AG04450 (cell line): ENCODE measurements at regions of chr3 and their contacts with region 1.

Region 1: GRCh38 chr3:185659942-185660921 is 74.1 kb downstream of the SENP2 start:
- DNase-seq: peak; percentile 64
- H3K4me3 ChIP-seq: no peak overlapping the region
- H3K27ac ChIP-seq: peak overlapping the region; percentile 47
- H3K27me3 ChIP-seq: no peaks in the 10 kb centered on the region
- CTCF ChIP-seq: peak; percentile 99

Region 2: GRCh38 chr3:185693985-185694653 is 33.9 kb after region 1 on chr3:
- CTCF ChIA-PET with region 1: interaction called, 27 read pairs
- POLR2A ChIA-PET with region 1: interaction called, 3 read pairs
- DNase-seq: no peak
- H3K4me3 ChIP-seq: no peak overlapping the region
- H3K27ac ChIP-seq: peak overlapping the region; percentile 61
- H3K27me3 ChIP-seq: no peaks in the 10 kb centered on the region
- CTCF ChIP-seq: no peak

Region 3: DNA sequence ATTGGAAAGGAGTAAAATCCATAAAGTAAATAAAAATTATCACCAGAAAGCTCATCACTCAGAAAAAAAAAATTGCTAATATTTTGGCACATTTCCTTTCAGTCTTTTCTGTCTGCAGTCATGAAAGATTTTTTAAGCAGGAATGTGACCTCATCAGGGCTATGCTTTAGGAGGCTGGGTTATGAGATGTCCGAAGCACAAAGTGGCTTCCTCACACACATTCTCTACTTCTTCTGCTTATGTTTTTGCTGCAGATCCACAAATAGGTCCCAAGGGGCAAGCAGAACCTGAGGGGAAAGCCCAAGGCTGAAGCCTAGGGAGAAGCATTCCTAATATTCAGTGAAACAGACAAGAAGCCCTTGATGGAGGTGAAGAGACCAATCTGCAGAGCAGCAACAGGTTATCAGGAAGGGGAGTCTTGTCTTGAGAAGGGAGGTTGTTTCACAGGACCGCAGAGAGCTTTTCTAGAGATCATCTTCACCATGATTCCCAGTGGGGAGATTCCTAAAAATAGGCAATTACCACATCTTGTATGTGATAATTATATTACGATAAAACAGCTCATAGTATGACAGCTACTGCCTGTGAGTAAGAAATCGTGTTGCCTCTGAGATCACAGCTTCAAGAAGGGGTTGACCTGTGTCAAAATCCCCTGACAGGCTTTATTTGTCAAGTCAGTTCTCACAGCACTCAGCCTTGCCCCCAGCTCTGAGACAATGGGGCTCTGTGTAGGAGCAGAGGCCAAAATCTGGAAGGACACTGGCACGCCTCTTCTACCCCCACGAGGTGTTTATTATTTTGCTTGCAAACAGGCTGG is 104.1 kb after region 1 on chr3:
- CTCF ChIA-PET with region 1: interaction called, 38 read pairs
- POLR2A ChIA-PET with region 1: interaction called, 6 read pairs
- DNase-seq: no peak
- H3K4me3 ChIP-seq: no peak overlapping the region
- H3K27ac ChIP-seq: no peak overlapping the region
- H3K27me3 ChIP-seq: no peaks in the 10 kb centered on the region
- CTCF ChIP-seq: no peak

Region 4: DNA sequence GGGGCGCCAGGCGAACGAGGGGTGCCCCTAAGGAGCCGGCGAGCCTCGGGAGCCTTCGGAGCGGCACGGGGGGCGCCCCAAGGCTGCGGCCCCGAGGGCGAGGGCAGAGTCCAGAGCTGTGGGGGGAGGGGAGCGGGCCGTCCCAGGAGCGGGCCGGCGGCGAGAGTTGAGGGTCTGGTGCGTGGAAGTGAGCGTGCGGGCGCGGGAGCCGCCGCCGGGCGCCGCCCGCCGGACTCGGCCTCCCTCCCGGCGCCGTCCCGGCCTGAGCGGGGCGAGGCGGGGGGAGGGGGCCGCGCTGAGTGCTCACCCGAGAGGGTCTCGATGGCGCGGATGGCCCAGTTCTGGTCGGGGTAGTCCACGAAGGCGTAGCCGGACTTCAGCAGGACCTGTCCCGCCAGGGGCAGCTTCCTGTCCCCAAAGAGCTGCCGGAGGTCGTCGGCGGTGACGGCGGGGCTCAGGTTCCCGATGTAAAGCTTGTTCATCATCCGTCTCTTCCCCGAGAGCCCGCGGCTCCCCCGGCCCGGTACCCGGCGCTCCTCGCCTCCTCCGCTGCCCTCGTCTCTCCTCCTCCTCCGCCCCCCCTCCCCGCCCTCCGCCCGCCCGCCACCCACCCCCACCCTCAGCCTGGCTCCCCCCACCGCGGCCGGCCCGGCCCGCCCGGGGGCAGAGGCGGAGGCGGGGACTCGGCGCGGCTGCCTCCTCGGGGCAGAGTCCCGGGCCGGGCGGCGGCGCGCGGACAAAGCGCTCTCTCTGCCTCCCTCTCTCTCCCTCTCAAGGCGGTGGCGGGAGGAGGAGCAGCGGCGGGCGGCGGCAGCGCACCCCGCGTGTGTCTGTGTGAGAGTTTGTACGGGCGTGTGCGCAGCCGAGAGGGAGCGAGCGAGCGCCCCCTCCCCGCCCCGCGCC is 164.5 kb after region 1 on chr3 and contains the start of gene IGF2BP2:
- CTCF ChIA-PET with region 1: interaction called, 48 read pairs
- POLR2A ChIA-PET with region 1: interaction called, 4 read pairs
- DNase-seq: peak; percentile 43
- H3K4me3 ChIP-seq: peak within 1 kb of the TSS; percentile 95
- H3K27ac ChIP-seq: peak within 1 kb of the TSS; percentile 86
- H3K27me3 ChIP-seq: no peaks in the 10 kb centered on the region
- CTCF ChIP-seq: no peak
- polyA plus RNA-seq, gene IGF2BP2: 9.9 and 25.2 TPM in 2 replicates

Region 5: DNA sequence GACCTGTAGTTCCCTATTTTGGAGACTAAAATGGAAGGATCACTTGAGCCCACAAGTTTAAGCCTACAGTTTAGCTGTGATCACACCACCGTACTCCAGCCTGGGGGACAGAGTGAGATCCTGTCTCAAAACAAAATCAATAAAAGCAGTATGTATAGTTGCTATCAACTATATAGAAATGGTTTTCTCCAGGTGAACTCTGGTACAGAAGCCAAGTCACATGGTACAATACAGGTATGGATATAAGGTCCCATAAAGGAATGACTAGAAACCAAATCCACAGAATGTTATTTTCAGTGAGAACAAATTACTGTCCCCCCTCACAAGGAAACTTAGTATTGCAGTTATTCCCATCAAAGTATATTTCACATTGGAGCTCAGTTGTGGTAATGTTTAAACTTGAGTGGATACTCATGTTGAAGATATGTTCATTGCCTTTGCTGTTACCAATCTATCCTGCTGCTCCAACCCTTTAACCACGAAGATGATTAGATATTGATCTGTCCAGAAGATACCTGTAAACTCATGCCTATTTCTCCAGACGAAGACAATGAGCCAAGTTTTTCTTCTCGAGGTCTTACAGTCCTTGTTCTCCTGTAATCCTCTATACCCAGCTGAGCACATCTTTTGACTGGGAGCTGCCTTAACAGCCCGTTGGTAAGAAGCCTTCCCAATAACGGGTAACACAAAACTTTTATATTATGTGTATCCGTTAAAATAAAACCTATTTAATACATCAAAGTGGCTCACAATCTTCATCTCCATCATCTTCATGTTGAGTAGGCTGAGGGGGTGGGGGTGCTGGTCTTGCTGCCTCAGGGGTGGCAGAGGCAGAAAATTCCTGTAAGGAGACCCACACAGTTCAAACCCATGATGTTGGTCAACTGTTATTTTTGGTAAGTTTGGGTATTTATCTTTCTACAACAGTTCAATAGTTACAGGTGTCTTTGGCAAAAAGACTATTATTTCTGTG is 253.0 kb after region 1 on chr3:
- CTCF ChIA-PET with region 1: interaction called, 45 read pairs
- POLR2A ChIA-PET with region 1: interaction called, 3 read pairs
- DNase-seq: no peak
- H3K4me3 ChIP-seq: no peak overlapping the region
- H3K27ac ChIP-seq: no peak overlapping the region
- H3K27me3 ChIP-seq: no peaks in the 10 kb centered on the region
- CTCF ChIP-seq: no peak

Region 6: GRCh38 chr3:185942907-185943759 is 282.9 kb after region 1 on chr3:
- CTCF ChIA-PET with region 1: interaction called, 65 read pairs
- POLR2A ChIA-PET with region 1: interaction called, 12 read pairs
- DNase-seq: peak; percentile 49
- H3K4me3 ChIP-seq: no peak overlapping the region
- H3K27ac ChIP-seq: no peak overlapping the region
- H3K27me3 ChIP-seq: peaks cover 5% of the 10 kb centered on the region
- CTCF ChIP-seq: peak; percentile 99

Region 7: DNA sequence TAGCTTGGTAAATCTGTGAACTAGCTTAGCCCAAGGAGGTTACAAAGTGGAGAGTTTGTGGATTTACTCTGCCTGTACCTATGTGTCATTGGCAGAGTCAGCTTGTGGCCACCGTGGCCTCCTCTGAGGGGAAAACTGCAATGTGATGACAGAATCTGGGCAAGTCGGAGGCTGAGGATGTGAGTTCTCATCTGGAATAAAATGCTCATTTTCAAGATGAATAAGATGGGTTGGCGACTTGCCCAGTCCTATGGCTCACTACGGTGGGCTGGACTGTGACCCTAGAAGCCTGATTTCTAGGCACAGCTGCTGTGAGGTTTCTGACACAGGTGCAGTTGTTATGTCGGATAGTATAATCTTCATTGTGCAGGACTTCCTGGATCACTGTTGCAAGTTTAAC is 364.9 kb after region 1 on chr3:
- CTCF ChIA-PET with region 1: no interaction called
- POLR2A ChIA-PET with region 1: no interaction called
- DNase-seq: peak; percentile 39
- H3K4me3 ChIP-seq: no peak overlapping the region
- H3K27ac ChIP-seq: peak overlapping the region; percentile 11
- H3K27me3 ChIP-seq: peaks cover 4% of the 10 kb centered on the region
- CTCF ChIP-seq: no peak